Sigmoid colon (tissue), 7 donors: ENCODE measurements at regions of chrX and their contacts with region 1.

Region 1: DNA sequence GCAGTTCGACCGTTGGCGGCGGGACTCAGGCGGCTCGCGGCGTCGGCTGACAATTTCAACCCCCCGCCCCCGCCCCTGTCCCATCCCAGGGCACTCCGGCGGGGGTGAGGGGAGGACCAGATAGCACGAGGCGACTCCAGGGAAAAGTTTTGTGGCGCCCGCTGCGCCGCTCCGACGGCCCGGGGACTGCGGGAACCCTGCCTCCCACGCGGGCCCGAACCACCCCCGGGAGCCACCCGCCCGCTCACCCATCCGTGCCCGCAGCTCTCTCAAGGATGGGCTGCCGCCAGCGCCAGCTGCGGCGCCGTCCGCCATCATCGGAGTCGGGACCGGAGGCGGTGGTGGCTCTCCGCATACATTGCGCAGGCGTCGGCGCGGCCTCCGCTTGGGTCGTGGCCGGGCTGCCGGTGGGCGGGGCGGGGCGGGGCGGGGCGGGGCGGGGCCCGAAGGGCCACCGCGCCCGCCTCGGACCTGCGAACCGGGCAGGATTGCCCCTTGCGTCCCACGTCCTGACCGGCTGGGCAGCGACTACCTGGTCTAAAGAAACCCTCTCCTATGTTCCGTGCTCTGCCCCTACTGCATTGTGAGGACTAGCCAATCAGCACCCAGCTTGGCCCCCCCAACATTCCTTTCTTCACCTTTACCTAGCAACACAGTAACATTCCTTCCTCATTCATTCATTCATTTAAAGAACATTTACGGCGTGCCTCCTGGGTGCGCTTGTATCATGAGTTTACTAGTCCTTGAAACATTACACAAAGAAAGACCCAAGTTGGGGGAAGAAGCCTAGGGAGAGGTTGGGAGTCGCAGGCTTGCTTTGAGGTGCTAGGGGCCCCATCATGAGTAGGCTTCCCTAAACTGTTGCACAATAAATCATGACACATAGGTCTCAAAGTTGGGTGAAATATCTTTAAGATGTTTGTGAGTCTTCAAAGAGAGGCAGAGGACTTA is at the start of gene MAP7D3:
- DNase-seq: peak; percentile 82
- H3K4me3 ChIP-seq: peak within 1 kb of the TSS; percentile 64 to 79 (median 74)
- H3K27ac ChIP-seq: peak within 1 kb of the TSS; percentile 86 to 91 (median 89)
- H3K4me1 ChIP-seq: peaks cover 0 to 7% (median 0%) of the 10 kb centered on the region in 4 donors
- H3K27me3 ChIP-seq: no peaks in the 10 kb centered on the region
- CTCF ChIP-seq: no peak
- EP300 ChIP-seq: no peak
- POLR2A ChIP-seq: peak; percentile 18
- total RNA-seq, gene MAP7D3: 11.3 to 21.0 (median 14.2) TPM

Region 2: DNA sequence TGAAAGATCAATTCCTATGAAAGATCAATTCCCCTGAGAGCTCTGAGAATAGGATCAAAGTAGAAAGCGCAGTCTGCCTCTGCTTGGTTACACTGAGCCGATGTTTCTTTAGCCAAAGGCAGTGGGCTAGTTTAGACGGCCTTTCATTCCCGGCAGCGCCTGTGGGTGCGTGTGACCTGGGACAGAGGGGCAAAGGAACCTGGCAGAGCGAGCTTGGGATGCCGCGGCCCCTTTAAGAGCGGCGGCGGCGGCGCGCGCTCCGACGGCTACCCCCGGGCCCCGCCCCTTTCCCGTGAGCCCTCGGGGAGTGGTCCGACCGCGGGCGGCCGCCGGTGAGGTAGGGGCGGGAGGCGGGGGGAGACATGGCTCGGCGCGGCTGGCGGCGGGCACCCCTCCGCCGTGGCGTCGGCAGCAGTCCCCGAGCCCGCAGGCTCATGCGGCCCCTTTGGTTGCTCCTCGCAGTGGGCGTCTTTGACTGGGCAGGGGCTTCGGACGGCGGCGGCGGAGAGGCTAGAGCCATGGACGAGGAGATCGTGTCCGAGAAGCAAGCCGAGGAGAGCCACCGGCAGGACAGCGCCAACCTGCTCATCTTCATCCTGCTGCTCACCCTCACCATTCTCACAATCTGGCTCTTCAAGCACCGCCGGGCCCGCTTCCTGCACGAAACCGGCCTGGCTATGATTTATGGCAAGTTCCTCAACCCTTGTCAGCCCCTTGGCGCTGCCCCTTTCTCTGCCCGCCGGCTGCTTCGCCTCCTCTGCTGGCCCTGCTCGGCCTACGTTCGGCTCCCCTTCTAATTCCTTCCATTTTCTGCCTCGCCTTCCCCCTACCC is 266.0 kb before region 1 on chrX and contains the start of gene SLC9A6:
- intact Hi-C with region 1: loop called (anchors 5 kb)
- DNase-seq: peak; percentile 87
- H3K4me3 ChIP-seq: peak within 1 kb of the TSS; percentile 51 to 75 (median 72)
- H3K27ac ChIP-seq: peak within 1 kb of the TSS; percentile 80 to 87 (median 85)
- H3K4me1 ChIP-seq: peaks cover 0 to 19% (median 2%) of the 10 kb centered on the region in 4 donors
- H3K27me3 ChIP-seq: no peaks in the 10 kb centered on the region
- CTCF ChIP-seq: no peak
- EP300 ChIP-seq: no peak
- POLR2A ChIP-seq: no peak
- total RNA-seq, gene SLC9A6: 12.5 to 16.9 (median 14.4) TPM